ENCODE measurements at regions of chr11 and their contacts with region 1.

Region 1: GRCh38 chr11:68020575-68020974 is 9.9 kb upstream of the NDUFS8 start:
- DNase-seq: no peak
- CTCF ChIP-seq: no peak

Region 2: DNA sequence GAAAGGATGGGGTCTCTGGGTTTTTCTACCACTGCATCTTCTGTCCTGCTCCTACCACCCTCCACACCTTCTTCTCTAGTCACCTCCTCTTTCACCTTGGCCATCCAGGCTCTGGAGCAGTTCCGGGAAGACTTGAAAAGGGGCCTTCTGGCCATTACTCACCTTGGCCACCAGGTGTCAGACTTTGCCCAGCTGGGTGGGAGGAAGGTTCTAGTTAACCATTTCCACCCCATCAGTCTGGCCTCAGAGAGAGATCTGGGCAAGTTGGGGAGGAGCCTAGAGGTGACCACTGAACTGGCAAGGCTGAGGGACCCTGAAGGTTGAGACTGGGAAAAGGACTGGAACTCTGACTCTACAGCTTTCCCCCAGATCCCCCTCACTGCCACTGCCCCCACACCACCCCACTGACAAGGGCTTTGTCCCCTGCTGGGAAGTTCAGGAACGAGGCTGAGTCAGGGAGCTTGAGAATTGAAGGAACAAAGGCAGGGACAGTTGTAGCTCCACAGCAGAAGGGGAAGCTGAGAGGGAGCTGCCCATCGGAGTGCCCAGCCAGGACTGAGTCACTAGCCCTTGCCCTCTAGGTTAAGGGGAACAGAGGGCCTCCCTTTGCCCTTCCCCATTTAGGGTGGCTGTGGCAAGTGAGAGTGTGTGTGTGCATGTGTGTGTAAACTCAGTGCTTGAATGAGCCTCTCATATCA is 663.6 kb before region 1 on chr11:
- in situ Hi-C with region 1: no loop called
- DNase-seq: peak; percentile 83
- CTCF ChIP-seq: peak; percentile 86

Region 3: DNA sequence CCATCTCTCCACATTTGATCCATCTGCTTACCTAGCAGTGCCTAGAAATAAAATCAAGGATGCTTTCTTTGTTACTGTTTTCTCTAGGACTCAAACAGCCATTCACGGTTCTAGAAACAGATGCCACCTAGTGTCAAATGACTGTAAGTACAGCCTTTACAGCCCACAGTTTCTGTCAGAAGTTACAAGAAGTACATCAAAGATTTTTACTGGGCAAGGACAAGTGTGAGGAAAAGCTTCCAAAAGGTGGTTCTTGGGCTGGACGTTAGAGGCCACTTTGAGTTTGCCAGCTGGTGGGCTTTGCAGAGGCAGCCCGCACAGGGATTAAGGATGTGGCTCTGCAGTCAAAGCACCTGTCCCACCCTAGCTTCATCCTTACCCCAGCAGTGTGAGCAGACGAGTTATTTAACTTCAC is 185.6 kb after region 1 on chr11:
- in situ Hi-C with region 1: loop called (anchors 10 kb)
- DNase-seq: peak; percentile 75
- CTCF ChIP-seq: peak; percentile 72

Region 4: GRCh38 chr11:68271023-68271780 is 250.6 kb after region 1 on chr11:
- in situ Hi-C with region 1: no loop called
- DNase-seq: peak; percentile 76
- CTCF ChIP-seq: peak; percentile 47

Region 5: DNA sequence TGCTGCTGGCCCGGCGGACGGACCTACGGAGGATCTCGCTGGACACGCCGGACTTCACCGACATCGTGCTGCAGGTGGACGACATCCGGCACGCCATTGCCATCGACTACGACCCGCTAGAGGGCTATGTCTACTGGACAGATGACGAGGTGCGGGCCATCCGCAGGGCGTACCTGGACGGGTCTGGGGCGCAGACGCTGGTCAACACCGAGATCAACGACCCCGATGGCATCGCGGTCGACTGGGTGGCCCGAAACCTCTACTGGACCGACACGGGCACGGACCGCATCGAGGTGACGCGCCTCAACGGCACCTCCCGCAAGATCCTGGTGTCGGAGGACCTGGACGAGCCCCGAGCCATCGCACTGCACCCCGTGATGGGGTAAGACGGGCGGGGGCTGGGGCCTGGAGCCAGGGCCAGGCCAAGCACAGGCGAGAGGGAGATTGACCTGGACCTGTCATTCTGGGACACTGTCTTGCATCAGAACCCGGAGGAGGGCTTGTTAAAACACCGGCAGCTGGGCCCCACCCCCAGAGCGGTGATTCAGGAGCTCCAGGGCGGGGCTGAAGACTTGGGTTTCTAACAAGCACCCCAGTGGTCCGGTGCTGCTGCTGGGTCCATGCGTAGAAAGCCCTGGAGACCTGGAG is 365.9 kb after region 1 on chr11:
- in situ Hi-C with region 1: no loop called
- DNase-seq: no peak
- CTCF ChIP-seq: no peak